ENCODE measurements at regions of chr5 and their contacts with region 1.

Region 1: GRCh38 chr5:124920909-124921666 is 174.6 kb upstream of the ZNF608 start:
- DNase-seq: no peak
- ATAC-seq: peak; percentile 92
- H3K4me3 ChIP-seq: peak overlapping the region; percentile 44; the same call in 1 of the 2 replicates
- H3K27ac ChIP-seq: peak overlapping the region; percentile 86
- H3K4me1 ChIP-seq: peaks cover 30% of the 10 kb centered on the region
- H3K27me3 ChIP-seq: no peaks in the 10 kb centered on the region
- CTCF ChIP-seq: peak in 1 of 3 experiments; percentile 14; a peak in 1 of 6 replicates
- EP300 ChIP-seq: peak; percentile 83 to 85
- POLR2A ChIP-seq: no peak
- RAD21 ChIP-seq: peak; percentile 27

Region 2: DNA sequence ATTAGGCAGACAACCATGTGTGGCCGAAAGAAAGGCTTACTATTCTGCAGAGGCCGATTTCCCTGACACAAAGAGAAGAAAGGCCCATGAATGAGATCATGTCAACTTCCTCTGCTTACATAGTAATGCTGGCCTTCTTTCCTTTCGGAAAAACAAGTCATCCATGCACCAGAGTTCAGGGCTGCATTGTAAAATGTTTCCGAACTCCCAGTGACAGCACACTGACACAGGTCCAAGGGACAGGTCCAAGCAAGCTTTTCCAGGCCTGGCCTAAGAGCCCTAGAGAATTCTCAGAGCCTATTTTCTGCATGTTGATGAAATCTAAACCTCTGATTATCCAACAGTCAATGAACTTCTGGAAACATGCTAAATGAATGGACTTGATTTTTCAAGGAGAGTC is 315.5 kb before region 1 on chr5:
- CTCF ChIA-PET with region 1: no interaction called
- POLR2A ChIA-PET with region 1: no interaction called
- RAD21 ChIA-PET with region 1: no interaction called
- SMC1A ChIA-PET with region 1: no interaction called
- in situ Hi-C with region 1: no loop called
- intact Hi-C with region 1: no loop called
- DNase-seq: no peak
- ATAC-seq: no peak
- H3K4me3 ChIP-seq: no peak overlapping the region
- H3K27ac ChIP-seq: no peak overlapping the region
- H3K4me1 ChIP-seq: no peaks in the 10 kb centered on the region
- H3K27me3 ChIP-seq: no peaks in the 10 kb centered on the region; a peak in 1 of 4 replicates
- CTCF ChIP-seq: no peak
- EP300 ChIP-seq: no peak
- POLR2A ChIP-seq: no peak
- RAD21 ChIP-seq: no peak

Region 3: DNA sequence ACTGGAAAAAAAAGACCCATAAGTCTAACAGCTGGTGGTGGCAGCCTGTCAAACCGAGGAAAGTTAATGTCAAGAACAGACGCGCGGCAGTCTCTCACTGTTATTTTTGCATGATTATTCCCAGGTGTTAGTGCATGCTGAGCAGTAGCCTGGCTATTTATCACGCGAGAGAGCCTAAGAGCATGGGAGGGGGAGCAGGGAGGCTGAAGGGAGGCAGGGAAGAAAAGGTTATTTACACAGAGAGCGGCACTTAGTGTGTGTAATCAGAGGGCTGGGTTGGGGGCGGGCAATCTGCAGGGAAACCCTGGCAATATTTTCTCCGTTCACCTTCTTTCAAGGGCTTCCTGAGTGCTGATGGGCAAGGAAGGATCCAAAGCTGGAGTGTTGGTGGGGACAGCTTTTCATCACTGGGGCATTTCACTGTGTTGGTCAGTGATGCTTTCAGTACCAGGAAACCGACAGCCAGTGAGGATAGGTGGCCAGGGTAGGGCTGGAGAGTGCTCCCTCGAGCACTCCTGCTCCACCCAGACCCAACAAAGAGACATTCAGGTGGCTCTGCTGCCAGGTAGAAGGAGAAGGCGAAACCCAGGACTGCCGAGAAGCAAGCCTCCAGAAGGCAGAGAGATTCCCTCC is 214.2 kb before region 1 on chr5:
- CTCF ChIA-PET with region 1: interaction called, 4 read pairs
- POLR2A ChIA-PET with region 1: no interaction called
- RAD21 ChIA-PET with region 1: interaction called, 23 read pairs
- SMC1A ChIA-PET with region 1: interaction called, 15 read pairs
- in situ Hi-C with region 1: no loop called
- intact Hi-C with region 1: no loop called
- DNase-seq: no peak
- ATAC-seq: no peak
- H3K4me3 ChIP-seq: peak overlapping the region; percentile 16; the same call in 1 of the 2 replicates
- H3K27ac ChIP-seq: peak overlapping the region; percentile 78
- H3K4me1 ChIP-seq: peaks cover 61% of the 10 kb centered on the region
- H3K27me3 ChIP-seq: no peaks in the 10 kb centered on the region
- CTCF ChIP-seq: no peak
- EP300 ChIP-seq: no peak
- POLR2A ChIP-seq: no peak
- RAD21 ChIP-seq: no peak

Region 4: DNA sequence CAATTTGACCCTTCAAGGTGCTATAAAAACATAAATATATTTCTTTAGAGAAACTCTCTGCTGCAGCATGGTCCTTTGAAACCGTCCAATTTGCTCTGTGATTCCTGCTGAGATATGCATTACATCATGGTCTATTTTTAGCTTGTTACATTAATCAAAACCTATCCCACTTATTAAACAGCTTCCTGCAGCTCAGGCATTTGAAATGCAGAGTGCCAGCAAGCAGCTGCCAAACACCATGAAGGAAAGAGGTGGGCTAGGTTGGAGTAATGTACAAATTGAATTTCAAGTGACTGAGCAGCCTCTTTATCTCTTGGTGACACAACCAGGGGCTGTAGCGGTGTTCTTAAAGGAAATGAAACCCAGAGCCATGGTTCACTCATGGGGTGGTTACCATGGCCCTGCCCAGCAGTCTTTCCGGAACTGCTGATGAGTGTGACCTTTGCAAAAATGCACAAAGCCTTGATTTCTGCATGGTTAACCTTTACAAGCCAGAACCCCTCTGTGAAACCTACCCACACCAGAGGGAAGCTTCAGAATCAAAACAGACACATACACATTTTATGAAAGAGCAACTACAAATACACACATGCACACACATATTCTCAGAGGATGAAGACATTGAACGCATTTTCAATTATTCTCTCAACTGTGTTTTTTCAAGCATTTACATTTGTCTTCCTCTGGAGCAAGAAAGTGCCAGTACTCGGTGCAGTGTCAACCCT is 18.8 kb before region 1 on chr5:
- CTCF ChIA-PET with region 1: interaction called, 18 read pairs
- POLR2A ChIA-PET with region 1: interaction called, 23 read pairs
- RAD21 ChIA-PET with region 1: interaction called, 190 read pairs
- SMC1A ChIA-PET with region 1: interaction called, 166 read pairs
- in situ Hi-C with region 1: no loop called
- intact Hi-C with region 1: no loop called
- DNase-seq: peak; percentile 92
- ATAC-seq: peak; percentile 99
- H3K4me3 ChIP-seq: 0 out of 2 replicates have a peak overlapping the region, but pooled peaks have one; percentile 15
- H3K27ac ChIP-seq: peak overlapping the region; percentile 59
- H3K4me1 ChIP-seq: peaks cover 17% of the 10 kb centered on the region
- H3K27me3 ChIP-seq: no peaks in the 10 kb centered on the region
- CTCF ChIP-seq: no peak
- EP300 ChIP-seq: peak; percentile 77 to 90; a peak in 3 of 4 replicates
- POLR2A ChIP-seq: 0 out of 2 replicates have a peak, but pooled peaks have one; percentile 33
- RAD21 ChIP-seq: peak; percentile 33; the same call in 1 of the 2 replicates

Region 5: DNA sequence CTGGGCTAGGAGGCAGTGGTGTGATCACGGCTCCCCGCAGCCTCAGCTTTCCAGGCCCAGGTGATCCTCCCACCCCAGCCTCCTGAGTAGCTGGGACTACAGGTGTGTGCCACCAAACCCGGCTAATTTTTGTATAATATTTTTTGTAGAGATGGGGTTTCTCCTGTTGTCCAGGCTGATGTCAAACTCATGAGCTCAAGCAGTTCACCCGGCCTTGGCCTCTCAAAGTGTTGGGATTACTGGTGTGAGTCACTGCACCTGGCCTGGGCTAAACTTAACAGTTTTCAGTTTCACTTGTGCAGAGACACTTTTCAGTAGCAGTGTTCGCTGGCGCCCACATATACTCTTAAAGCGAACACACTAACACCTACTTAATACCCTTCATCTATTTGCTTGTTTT is 31.0 kb after region 1 on chr5:
- CTCF ChIA-PET with region 1: interaction called, 7 read pairs
- POLR2A ChIA-PET with region 1: interaction called, 8 read pairs
- RAD21 ChIA-PET with region 1: interaction called, 19 read pairs
- SMC1A ChIA-PET with region 1: interaction called, 34 read pairs
- in situ Hi-C with region 1: no loop called
- intact Hi-C with region 1: no loop called
- DNase-seq: peak; percentile 69
- ATAC-seq: peak; percentile 98
- H3K4me3 ChIP-seq: peak overlapping the region; percentile 18; the same call in 1 of the 2 replicates
- H3K27ac ChIP-seq: peak overlapping the region; percentile 75
- H3K4me1 ChIP-seq: peaks cover 15% of the 10 kb centered on the region
- H3K27me3 ChIP-seq: no peaks in the 10 kb centered on the region
- CTCF ChIP-seq: no peak
- EP300 ChIP-seq: peak in 1 of 2 experiments; percentile 57; a peak in 1 of 4 replicates
- POLR2A ChIP-seq: no peak
- RAD21 ChIP-seq: peak; percentile 28

Region 6: DNA sequence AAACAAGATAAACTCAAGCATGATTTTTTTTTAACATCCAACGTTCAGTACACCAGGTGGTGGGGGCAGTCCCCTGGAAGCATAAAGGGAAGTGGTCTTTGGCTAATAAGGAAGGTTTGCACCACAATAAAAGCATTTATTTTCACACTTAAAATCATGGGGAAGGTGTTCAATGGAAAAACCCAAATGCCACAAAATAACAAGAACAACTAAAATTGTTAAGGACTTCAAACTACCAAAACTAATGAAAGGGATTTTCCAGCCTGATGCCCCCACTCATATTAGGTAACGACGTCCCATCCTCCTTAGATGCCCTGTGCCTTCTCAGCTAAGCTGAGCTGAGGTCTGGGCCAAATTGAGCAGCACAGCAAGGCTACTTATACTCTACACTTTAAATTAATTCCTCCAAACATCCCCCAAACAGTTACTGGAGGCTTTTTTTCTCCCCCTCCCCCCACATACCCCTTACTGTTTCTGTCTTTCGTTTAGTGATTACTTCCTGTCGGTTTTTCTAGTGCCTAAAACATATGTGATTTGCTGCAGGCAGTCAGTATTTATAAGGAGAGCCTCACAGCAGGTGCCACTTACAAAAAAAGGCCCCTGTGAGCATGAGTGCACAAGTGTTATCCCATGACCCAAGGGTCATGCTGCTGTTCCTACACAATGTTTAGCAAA is 85.1 kb after region 1 on chr5:
- CTCF ChIA-PET with region 1: interaction called, 5 read pairs
- POLR2A ChIA-PET with region 1: interaction called, 10 read pairs
- RAD21 ChIA-PET with region 1: interaction called, 55 read pairs
- SMC1A ChIA-PET with region 1: interaction called, 47 read pairs
- in situ Hi-C with region 1: no loop called
- intact Hi-C with region 1: loop called (anchors 5 kb)
- DNase-seq: peak; percentile 71
- ATAC-seq: peak; percentile 82
- H3K4me3 ChIP-seq: 0 out of 2 replicates have a peak overlapping the region, but pooled peaks have one; percentile 0
- H3K27ac ChIP-seq: peak overlapping the region; percentile 69
- H3K4me1 ChIP-seq: peaks cover 18% of the 10 kb centered on the region
- H3K27me3 ChIP-seq: no peaks in the 10 kb centered on the region
- CTCF ChIP-seq: no peak
- EP300 ChIP-seq: peak; percentile 92 to 95
- POLR2A ChIP-seq: no peak
- RAD21 ChIP-seq: peak; percentile 36

Region 7: DNA sequence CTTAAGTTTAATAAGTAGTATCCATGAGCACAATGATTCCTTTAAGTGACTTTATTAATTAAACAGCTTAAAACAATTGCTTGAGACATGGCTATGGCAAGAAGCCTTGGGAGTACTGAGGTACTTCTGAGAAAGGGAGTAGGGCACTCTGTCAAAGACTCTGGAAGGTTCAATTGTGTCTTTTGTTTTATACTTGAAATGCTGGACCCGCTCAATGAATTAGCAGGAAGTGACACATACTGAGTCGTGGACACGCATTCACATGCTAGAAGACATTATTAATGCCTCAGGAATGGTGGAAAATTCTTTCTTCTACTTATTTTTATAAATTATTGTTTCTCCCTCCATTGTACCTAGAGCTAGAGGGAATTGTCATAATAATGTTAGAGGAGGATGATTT is 172.7 kb after region 1 on chr5:
- CTCF ChIA-PET with region 1: no interaction called
- POLR2A ChIA-PET with region 1: no interaction called
- RAD21 ChIA-PET with region 1: no interaction called
- SMC1A ChIA-PET with region 1: no interaction called
- in situ Hi-C with region 1: no loop called
- intact Hi-C with region 1: no loop called
- DNase-seq: no peak
- ATAC-seq: no peak
- H3K4me3 ChIP-seq: no peak overlapping the region
- H3K27ac ChIP-seq: no peak overlapping the region
- H3K4me1 ChIP-seq: no peaks in the 10 kb centered on the region
- H3K27me3 ChIP-seq: no peaks in the 10 kb centered on the region
- CTCF ChIP-seq: no peak
- EP300 ChIP-seq: no peak
- POLR2A ChIP-seq: no peak
- RAD21 ChIP-seq: no peak

Region 8: DNA sequence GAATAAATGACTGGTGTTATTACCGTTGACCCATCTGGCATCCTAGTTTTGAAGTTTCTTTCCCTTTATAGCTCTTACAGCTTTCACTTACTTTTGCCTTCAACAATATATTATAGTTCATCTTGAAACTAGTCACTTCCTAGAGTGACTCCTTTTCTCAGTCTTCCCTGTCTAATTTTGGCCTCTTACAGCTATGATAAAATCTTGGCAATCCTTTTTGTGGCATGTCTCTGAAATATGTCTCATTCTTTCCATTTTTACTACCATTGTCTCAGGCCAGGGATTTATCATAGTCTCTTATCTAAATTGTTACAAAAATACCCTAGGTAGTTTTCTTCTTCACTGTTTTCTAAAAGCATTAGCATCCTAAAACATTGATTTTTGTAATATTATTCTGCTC is 446.6 kb after region 1 on chr5:
- CTCF ChIA-PET with region 1: no interaction called
- POLR2A ChIA-PET with region 1: no interaction called
- RAD21 ChIA-PET with region 1: no interaction called
- SMC1A ChIA-PET with region 1: no interaction called
- in situ Hi-C with region 1: no loop called
- intact Hi-C with region 1: no loop called
- DNase-seq: no peak
- ATAC-seq: no peak
- H3K4me3 ChIP-seq: no peak overlapping the region
- H3K27ac ChIP-seq: no peak overlapping the region
- H3K4me1 ChIP-seq: no peaks in the 10 kb centered on the region
- H3K27me3 ChIP-seq: no peaks in the 10 kb centered on the region
- CTCF ChIP-seq: no peak
- EP300 ChIP-seq: no peak
- POLR2A ChIP-seq: no peak
- RAD21 ChIP-seq: no peak

Measured in GM12878 (cell line).